ENCODE measurements at regions of chr14 and their contacts with region 1.

Region 1: GRCh38 chr14:20690848-20691523 is 2.4 kb downstream of the ANG start:
- DNase-seq: no peak
- H3K4me3 ChIP-seq: no peak overlapping the region
- H3K27ac ChIP-seq: no peak overlapping the region
- H3K4me1 ChIP-seq: peaks cover 0 to 10% (median 3%) of the 10 kb centered on the region in 6 donors
- H3K27me3 ChIP-seq: no peaks in the 10 kb centered on the region
- CTCF ChIP-seq: peak; percentile 75 to 93 (median 88)
- POLR2A ChIP-seq: peak in 1 of 3 donors; percentile 8

Region 2: GRCh38 chr14:20327005-20327869 is 363.7 kb before region 1 on chr14:
- intact Hi-C with region 1: loop called (anchors 5 kb)
- DNase-seq: no peak
- H3K4me3 ChIP-seq: no peak overlapping the region
- H3K27ac ChIP-seq: peak overlapping the region in 4 of 8 donors; percentile 8 to 42 (median 24)
- H3K4me1 ChIP-seq: peaks cover 6 to 42% (median 27%) of the 10 kb centered on the region in 6 donors
- H3K27me3 ChIP-seq: no peaks in the 10 kb centered on the region
- CTCF ChIP-seq: peak; percentile 59 to 82 (median 75)
- POLR2A ChIP-seq: no peak

Region 3: DNA sequence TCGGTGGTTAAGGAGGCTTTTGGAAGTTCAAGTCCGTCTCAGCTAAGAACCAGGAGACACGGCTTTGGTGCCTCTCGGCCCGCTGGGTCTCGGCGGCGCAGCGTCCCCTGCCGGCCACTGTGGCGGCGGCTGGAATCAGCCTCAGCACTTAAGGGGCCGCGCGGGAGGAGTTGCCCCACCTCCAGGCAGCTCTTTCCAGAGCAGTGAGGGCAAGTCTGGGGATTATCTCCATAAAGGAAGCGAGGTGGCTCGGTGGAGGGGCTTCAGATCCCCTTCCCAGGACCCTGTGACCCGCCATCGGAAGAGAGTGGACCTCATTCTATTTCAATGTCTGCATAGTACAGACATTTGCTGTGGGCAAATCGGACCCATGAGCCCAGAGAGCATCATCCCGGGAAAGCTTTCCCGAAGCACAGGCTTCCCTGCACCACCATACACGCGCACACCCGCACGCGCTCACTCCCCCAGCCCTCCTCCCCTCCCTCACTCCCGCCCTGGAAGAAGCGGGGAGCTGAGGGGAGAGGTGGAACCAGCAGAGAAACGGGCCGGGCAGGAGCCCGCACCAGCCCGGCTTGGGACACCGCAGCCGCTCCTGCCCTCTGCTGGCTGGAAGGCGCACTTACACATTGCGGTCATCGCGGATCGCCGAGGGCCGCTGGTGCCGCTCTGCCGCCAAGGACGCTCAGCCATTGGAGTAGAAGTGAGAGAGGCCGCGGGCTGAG is 280.2 kb after region 1 on chr14:
- intact Hi-C with region 1: loop called (anchors 10 kb)
- DNase-seq: peak; percentile 96
- H3K4me3 ChIP-seq: peak overlapping the region; percentile 55 to 80 (median 60)
- H3K27ac ChIP-seq: peak overlapping the region; percentile 21 to 84 (median 78)
- H3K4me1 ChIP-seq: peaks cover 0 to 21% (median 17%) of the 10 kb centered on the region in 6 donors
- H3K27me3 ChIP-seq: peaks cover 0 to 14% (median 0%) of the 10 kb centered on the region in 7 donors
- CTCF ChIP-seq: peak; percentile 80 to 97 (median 94)
- POLR2A ChIP-seq: no peak

Measured in spleen (tissue), 13 donors.